AG04449 (cell line): ENCODE measurements at regions of chr7 and their contacts with region 1.

Region 1: GRCh38 chr7:143901668-143902331 is at the start of gene TCAF1:
- DNase-seq: peak; percentile 49
- H3K4me3 ChIP-seq: peak within 1 kb of the TSS; percentile 89
- CTCF ChIP-seq: peak; percentile 40

Region 2: GRCh38 chr7:143884969-143885559 is 16.7 kb before region 1 on chr7:
- CTCF ChIA-PET with region 1: interaction called, 27 read pairs
- POLR2A ChIA-PET with region 1: interaction called, 19 read pairs
- DNase-seq: no peak
- H3K4me3 ChIP-seq: peak overlapping the region; percentile 86
- CTCF ChIP-seq: no peak

Region 3: GRCh38 chr7:143936087-143937009 is 34.5 kb after region 1 on chr7:
- CTCF ChIA-PET with region 1: interaction called, 5 read pairs
- POLR2A ChIA-PET with region 1: interaction called, 13 read pairs
- DNase-seq: peak; percentile 83
- H3K4me3 ChIP-seq: no peak overlapping the region
- CTCF ChIP-seq: no peak

Region 4: GRCh38 chr7:144037414-144038035 is 135.7 kb after region 1 on chr7:
- CTCF ChIA-PET with region 1: no interaction called
- POLR2A ChIA-PET with region 1: no interaction called
- DNase-seq: no peak
- H3K4me3 ChIP-seq: no peak overlapping the region
- CTCF ChIP-seq: no peak

Region 5: GRCh38 chr7:144497282-144497681 is 595.5 kb after region 1 on chr7:
- CTCF ChIA-PET with region 1: no interaction called
- POLR2A ChIA-PET with region 1: no interaction called
- DNase-seq: no peak
- H3K4me3 ChIP-seq: no peak overlapping the region
- CTCF ChIP-seq: no peak